Endothelial cell of umbilical vein (primary cell): ENCODE measurements at regions of chr10 and their contacts with region 1.

Region 1: DNA sequence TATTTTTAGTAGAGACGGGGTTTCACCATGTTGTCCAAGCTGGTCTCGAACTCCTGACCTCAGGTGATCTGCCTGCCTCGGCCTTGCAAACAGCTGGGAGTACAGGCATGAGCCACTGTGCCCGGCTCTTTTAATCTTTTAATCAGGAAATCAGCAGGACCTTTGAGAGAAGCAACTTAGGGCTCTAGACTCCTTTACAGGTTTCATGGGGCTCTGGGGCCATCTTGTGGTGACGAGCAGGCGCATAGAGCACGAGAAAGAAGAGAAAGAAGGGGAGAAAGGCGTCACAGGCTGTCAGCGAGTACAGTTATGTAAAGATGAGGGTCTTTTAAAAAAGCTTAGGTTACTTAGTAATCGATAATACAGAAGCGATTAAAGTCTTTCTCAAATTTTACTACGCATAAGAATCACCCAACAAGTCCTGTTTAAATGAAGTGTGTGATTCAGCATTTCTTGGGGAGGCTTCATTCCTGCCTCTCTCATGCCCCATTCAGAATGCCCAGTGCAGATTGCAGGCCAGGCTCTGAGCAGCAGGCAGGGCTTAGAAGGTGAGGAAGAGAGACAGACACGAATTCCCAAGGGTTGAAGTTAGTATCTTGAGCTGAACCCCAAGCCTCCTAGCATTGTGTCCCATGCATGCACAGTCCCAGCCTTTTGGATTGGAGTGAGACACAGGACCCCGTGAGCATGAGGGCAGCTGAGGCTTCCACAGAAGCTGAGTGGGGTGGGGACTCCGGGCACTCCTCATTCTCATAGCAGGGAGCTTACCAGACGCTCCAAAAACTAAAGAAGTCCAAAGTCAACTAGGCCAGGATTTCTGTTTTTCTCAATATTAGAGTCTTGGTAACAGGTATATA is 23.6 kb upstream of the PFKP start:
- DNase-seq: peak; percentile 75
- H3K4me3 ChIP-seq: no peak overlapping the region
- H3K27ac ChIP-seq: no peak overlapping the region
- H3K4me1 ChIP-seq: peaks cover 24% of the 10 kb centered on the region
- H3K27me3 ChIP-seq: peaks cover 1 to 2% of the 10 kb centered on the region in 2 experiments
- CTCF ChIP-seq: peak; percentile 79 to 83
- POLR2A ChIP-seq: no peak

Region 2: DNA sequence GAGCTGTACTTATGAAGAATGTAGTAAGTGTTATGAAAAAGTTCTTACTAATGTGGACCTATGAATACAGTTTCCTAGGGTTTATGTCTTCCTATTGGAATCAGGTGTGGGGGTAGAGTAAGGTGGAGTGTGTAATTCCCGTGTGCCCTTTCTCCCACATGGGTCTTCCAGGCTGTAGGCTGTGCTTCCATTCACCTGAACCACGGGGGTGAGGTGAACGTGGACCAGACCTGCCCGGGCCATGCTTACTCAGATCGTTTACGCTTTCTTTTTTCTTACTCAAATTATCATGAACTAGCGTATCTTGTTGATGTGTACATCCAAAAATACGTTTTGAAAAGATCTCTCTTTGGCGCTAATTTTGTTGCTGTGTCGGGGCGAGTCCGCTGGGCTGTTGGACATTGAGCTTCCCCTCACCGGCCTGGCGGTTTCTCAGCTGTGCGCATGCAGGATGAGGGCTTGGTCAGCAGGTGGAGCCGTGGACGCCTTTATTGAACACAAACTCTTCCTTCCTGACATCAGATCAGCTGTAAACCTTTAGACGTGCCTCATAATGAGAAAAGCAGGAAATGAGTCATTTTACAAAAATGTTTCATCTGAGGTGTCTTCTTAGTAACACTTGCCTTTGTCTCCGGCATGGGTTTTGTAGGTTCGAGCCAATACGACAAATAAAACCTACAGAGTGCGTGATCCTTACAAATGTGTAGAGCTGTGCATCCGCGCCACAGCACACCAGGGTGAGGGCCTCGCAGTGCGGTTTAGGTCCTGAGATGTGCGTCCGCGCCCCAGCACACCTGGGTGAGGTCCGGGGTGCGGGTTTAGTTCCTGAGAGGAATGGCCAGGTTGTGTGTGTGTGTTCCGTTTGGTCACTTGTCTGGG is 1933.7 kb before region 1 on chr10:
- CTCF ChIA-PET with region 1: interaction called, 30 read pairs
- POLR2A ChIA-PET with region 1: no interaction called
- dilution Hi-C with region 1: no loop called
- intact Hi-C with region 1: loop called (anchors 1 kb)
- DNase-seq: peak; percentile 69
- H3K4me3 ChIP-seq: peak overlapping the region in 1 of 3 experiments; percentile 4
- H3K27ac ChIP-seq: peak overlapping the region; percentile 91
- H3K4me1 ChIP-seq: peaks cover 11% of the 10 kb centered on the region
- H3K27me3 ChIP-seq: no peaks in the 10 kb centered on the region
- CTCF ChIP-seq: peak; percentile 64 to 72
- POLR2A ChIP-seq: no peak

Region 3: DNA sequence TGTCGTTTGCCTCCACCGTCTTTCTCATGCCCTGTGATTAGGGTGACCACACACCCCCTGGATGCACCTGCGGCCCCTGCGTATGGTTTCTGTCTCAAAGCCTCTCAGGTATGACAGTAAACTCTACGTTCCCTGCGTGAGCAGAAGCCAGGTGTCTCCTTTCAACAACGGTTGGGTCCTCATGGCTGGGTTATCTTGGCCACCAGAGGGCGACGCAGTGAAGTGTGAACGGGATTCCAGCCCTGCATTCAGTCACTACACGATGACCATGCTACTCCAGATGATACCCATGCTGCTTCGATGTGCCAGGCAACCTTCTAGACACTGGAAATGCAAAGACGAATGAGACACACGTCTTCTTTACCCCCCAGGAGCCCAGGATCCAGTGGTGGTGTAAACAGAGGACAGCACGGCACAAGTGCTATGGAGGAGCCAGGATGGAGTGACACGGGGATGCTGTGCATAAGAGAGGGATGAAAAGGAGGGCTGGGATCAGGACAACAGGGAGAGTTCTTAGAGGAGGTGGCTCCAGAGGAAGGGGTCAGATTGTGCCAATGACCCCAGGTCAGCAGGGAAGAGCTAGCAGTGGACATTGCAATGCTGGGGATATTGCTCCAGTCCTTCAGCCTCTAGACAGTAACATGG is 204.5 kb before region 1 on chr10:
- CTCF ChIA-PET with region 1: interaction called, 83 read pairs
- POLR2A ChIA-PET with region 1: no interaction called
- dilution Hi-C with region 1: loop called (anchors 25 kb)
- intact Hi-C with region 1: no loop called
- DNase-seq: peak; percentile 48
- H3K4me3 ChIP-seq: no peak overlapping the region
- H3K27ac ChIP-seq: no peak overlapping the region
- H3K4me1 ChIP-seq: no peaks in the 10 kb centered on the region
- H3K27me3 ChIP-seq: peaks cover 0 to 3% of the 10 kb centered on the region in 2 experiments
- CTCF ChIP-seq: peak; percentile 76 to 78
- POLR2A ChIP-seq: no peak

Region 4: DNA sequence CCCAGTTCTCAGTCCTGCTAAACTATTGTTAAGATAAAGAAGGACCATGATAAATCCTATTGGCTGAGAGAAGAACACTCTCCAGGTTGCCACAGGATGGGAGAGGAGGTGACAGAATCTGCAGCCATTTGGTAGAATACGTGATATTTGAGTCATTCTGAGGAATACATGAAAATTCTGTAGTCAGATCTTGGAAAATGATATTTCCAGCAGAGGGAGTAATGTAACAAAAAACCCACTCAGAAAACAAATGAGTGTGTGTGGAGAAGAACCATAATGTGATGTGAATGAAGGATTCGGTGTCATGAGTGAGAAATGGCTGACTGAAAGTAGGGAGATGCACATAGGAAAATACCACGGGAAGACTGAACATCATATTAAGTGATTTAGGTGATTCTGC is 104.9 kb before region 1 on chr10:
- CTCF ChIA-PET with region 1: interaction called, 14 read pairs
- POLR2A ChIA-PET with region 1: no interaction called
- dilution Hi-C with region 1: no loop called
- intact Hi-C with region 1: no loop called
- DNase-seq: peak; percentile 10
- H3K4me3 ChIP-seq: no peak overlapping the region
- H3K27ac ChIP-seq: no peak overlapping the region
- H3K4me1 ChIP-seq: no peaks in the 10 kb centered on the region
- H3K27me3 ChIP-seq: peaks cover 14 to 17% of the 10 kb centered on the region in 2 experiments
- CTCF ChIP-seq: no peak
- POLR2A ChIP-seq: no peak

Region 5: GRCh38 chr10:2978111-2978510 is 65.6 kb before region 1 on chr10:
- CTCF ChIA-PET with region 1: interaction called, 4 read pairs
- POLR2A ChIA-PET with region 1: no interaction called
- dilution Hi-C with region 1: no loop called
- intact Hi-C with region 1: loop called (anchors 5 kb)
- DNase-seq: peak; percentile 61
- H3K4me3 ChIP-seq: no peak overlapping the region
- H3K27ac ChIP-seq: no peak overlapping the region
- H3K4me1 ChIP-seq: no peaks in the 10 kb centered on the region
- H3K27me3 ChIP-seq: no peaks in the 10 kb centered on the region
- CTCF ChIP-seq: peak; percentile 16 to 32
- POLR2A ChIP-seq: no peak

Region 6: GRCh38 chr10:3066317-3066931 is 22.7 kb after region 1 on chr10:
- CTCF ChIA-PET with region 1: interaction called, 6 read pairs
- POLR2A ChIA-PET with region 1: interaction called, 6 read pairs
- dilution Hi-C with region 1: no loop called
- intact Hi-C with region 1: loop called (anchors 1 kb)
- DNase-seq: no peak
- H3K4me3 ChIP-seq: peak overlapping the region in 2 of 3 experiments; percentile 23 to 96
- H3K27ac ChIP-seq: no peak overlapping the region
- H3K4me1 ChIP-seq: peaks cover 27% of the 10 kb centered on the region
- H3K27me3 ChIP-seq: no peaks in the 10 kb centered on the region
- CTCF ChIP-seq: no peak
- POLR2A ChIP-seq: no peak

Region 7: DNA sequence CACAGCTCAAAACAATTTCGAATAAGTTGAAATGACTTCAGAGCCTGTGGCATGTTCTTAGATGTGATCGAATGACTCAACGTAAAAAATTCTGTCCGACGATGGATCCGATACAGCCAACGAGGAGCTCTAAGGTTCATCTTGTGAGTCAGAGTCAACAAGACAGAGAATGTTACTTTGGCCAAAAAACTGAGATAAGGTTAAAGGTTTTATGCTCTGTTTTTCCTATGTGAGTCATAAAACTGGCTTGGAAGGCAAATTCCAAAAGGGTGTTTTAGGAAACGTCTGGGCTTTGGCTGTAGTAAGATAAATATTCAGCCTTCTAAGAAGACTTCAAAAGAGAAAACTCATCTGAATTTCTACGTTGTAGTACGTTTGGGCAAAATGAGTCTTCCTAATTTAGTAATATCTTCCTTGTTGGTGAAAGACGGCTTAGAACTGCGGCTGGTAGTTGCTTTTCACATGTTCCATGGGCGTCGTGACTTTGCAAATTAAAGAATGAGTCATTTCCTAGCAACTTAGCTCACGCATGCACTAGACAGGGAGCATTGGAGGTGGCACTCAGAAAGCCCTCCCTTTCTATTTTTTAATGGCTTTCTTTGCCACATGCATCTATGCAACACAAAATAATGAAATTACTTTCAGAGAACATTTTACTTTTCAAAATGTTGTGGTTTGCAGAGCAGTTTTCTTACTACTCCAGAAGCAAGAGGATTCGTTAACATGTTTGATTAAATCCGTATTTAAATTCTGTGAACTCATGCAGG is 51.8 kb after region 1 on chr10:
- CTCF ChIA-PET with region 1: interaction called, 4 read pairs
- POLR2A ChIA-PET with region 1: interaction called, 4 read pairs
- dilution Hi-C with region 1: no loop called
- intact Hi-C with region 1: loop called (anchors 1 kb)
- DNase-seq: peak; percentile 98
- H3K4me3 ChIP-seq: peak overlapping the region in 1 of 3 experiments; percentile 43
- H3K27ac ChIP-seq: peak overlapping the region; percentile 100
- H3K4me1 ChIP-seq: peaks cover 65% of the 10 kb centered on the region
- H3K27me3 ChIP-seq: no peaks in the 10 kb centered on the region
- CTCF ChIP-seq: no peak
- POLR2A ChIP-seq: peak; percentile 69